ENCODE measurements at regions of chr5 and their contacts with region 1.

Region 1: DNA sequence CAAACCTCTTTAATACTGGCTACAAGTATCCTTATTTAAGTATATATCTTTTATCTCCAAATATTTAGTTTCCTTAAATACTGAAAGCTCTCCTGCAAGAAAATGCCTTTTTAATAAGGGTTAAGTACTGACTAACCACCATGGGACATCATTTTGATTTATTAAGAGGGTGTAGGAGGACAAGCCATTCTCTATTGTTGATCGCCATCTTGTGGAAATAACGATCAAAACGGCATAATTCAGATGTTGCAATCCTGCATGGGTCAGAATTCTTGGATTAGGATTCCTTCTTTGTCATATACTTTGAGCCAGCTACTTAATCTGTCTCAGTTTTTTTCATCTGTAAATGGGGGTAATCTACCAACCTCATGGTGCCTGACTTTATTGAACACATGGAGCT is 28.7 kb upstream of the C5orf46 start:
- DNase-seq: peak in 2 of 4 donors; percentile 18 to 44
- ATAC-seq: peak; percentile 77
- H3K4me3 ChIP-seq: no peak overlapping the region
- H3K27ac ChIP-seq: no peak overlapping the region
- H3K4me1 ChIP-seq: no peaks in the 10 kb centered on the region
- H3K27me3 ChIP-seq: no peaks in the 10 kb centered on the region
- CTCF ChIP-seq: peak; percentile 23 to 28

Region 2: DNA sequence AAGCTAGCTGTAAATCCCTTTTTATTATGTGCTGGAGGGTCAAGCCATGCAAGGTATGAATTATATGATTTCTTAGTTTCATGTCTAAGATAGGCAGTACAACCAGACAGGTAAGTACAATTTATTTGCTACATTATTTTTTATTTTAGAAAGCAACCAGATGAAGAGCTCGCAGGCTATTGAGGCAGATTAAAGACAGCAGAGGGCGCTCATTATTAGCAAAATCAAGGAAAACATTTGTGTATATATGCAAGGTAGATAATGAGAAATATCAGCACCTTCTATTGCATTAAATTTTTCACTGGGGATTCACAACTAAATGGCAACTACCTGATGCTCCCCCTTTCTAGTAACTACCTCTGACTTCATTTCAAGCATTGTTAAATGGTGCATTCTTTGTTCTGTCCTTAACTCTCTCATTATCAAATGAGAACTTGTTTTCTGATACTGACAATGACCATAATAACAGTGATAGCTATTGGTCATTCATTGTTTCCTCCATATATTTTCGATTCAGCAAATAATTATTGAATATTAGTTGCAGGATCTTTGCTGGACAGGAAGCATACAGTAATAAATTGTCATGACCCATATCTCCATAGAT is 47.9 kb before region 1 on chr5:
- intact Hi-C with region 1: loop called in 1 of 2 experiments (anchors 10 kb)
- DNase-seq: peak in 1 of 4 donors; percentile 16
- ATAC-seq: peak; percentile 73
- H3K4me3 ChIP-seq: no peak overlapping the region
- H3K27ac ChIP-seq: no peak overlapping the region
- H3K4me1 ChIP-seq: no peaks in the 10 kb centered on the region
- H3K27me3 ChIP-seq: no peaks in the 10 kb centered on the region
- CTCF ChIP-seq: peak; percentile 44 to 46

Region 3: DNA sequence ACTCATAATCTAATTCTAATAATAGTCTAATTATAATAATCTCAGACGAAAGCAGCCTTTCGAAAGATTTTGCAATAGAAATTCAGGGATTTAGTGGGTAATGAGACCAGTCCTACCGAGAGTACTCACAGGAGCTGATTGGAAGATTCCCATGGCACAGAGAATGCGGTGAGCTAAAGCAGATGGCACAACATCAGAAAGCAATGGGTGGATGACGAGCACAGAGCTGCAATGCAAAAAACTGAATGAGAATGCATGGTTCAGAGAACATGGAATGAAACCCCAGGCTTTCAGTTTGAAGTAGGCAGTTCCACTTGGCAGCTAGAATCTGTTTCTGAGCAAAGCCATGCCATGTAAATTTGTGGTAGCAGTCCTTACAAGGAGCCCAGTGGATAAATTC is 50.6 kb after region 1 on chr5:
- intact Hi-C with region 1: no loop called
- DNase-seq: no peak
- ATAC-seq: no peak
- H3K4me3 ChIP-seq: no peak overlapping the region
- H3K27ac ChIP-seq: no peak overlapping the region
- H3K4me1 ChIP-seq: no peaks in the 10 kb centered on the region
- H3K27me3 ChIP-seq: no peaks in the 10 kb centered on the region
- CTCF ChIP-seq: no peak

Measured in left lung (tissue), 14 donors.